ENCODE measurements at regions of chr20 and their contacts with region 1.

Region 1: DNA sequence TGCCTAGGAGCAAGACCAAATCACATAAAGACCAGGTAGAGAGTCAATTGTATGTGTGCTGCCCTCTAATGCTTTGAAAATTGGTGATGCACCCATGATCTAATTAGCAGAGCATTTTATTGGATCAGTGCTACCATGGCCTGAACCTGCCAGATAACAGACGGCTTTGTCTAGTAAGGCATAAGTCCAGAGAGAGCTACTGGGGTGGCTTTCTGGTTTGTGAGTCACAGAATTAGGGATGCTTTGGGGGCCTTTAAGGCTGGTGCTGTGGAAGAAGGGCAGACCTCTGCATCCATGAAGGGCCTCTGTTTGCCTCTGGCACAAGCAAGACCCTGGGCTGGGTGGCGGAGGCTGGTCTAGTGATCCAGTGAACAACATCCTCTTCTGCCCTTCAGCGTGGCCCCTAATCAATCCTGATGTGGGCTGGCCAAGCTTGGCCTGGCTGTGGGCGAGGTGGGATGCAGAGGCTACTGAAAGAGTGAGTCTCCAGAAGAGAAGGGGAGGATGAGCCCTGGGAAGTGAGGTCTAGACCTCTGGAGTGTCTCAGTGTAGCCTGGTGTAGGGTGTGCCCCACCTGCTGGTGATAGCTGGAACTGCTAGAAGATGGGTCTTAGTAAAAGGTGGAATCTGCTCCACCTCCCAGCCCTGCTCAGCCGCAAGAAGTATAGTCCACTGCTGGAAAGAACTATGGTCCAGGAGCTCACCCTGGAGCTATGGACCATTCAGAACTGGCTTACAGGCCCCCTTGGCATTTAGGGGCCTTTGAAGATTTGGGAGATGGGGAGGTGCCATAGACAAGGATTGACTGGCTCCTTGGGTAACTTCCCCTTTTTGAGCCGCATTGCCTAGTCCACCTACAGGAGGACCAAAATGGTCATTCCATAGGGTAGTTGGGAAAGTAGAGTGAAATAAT is 36.7 kb upstream of the AAR2 start:
- H3K4me3 Mint-ChIP-seq: no peak overlapping the region
- H3K27ac Mint-ChIP-seq: no peak overlapping the region
- H3K4me1 Mint-ChIP-seq: peaks cover 18% of the 10 kb centered on the region
- H3K27me3 Mint-ChIP-seq: peaks cover 25% of the 10 kb centered on the region

Region 2: DNA sequence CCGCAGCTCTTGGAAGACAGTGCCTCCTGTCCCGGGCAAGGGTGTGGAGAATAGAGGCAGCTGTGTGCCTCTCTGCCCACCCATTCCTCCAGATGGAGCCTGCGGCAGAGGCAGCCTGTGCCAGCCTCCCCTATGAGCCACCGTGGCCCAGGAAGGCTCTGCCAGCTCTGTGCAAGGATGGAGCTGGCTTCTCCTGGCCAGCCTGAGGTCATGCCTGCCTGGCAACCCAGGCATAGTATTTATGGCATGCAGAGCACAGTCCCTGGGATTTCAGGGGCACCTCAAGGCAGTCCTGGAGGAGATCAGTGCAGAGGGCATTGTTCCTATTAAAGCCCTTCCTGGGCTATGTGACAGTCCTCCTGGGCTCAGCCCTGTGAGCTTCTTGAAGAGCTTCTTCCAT is 43.6 kb before region 1 on chr20:
- intact Hi-C with region 1: loop called (anchors 2 kb)
- H3K4me3 Mint-ChIP-seq: no peak overlapping the region
- H3K27ac Mint-ChIP-seq: no peak overlapping the region
- H3K4me1 Mint-ChIP-seq: peaks cover 10% of the 10 kb centered on the region
- H3K27me3 Mint-ChIP-seq: peaks cover 57% of the 10 kb centered on the region

Region 3: DNA sequence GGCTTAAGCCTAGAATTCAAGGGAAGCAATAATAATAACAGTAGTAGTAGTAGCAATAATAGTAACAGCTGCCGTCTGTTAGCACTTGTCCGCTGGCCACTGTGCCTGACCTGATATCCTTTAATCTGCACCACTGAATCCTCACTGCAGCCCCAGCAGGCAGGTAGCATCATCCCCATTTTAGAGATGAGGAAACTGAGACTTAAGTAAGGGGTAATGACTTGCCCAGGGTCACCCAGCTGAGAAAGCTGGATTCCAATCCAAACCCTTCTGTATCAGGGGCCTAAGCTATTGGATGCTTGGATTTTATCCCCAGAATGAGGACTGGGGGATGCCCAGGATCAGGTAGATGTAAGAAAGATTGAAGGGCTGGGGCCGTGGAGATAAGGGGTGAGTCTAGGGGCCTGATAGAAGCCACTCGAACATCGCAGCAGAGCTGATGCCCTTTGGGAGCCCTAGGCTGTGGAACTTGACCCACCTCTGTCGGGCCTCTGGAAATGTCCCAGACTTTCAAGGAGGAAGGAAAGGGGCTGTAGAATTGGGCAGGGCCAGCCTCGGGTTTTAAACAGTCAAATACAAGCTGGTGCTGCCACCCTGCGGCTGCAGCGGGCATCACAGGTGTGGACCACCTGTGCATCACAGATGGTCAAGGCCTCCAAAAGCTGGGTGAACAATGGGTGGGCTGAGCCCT is 239.6 kb after region 1 on chr20:
- intact Hi-C with region 1: loop called (anchors 1 kb)
- H3K4me3 Mint-ChIP-seq: no peak overlapping the region
- H3K27ac Mint-ChIP-seq: no peak overlapping the region
- H3K4me1 Mint-ChIP-seq: peaks cover 11% of the 10 kb centered on the region
- H3K27me3 Mint-ChIP-seq: peaks cover 22% of the 10 kb centered on the region